WTC11 (cell line): ENCODE measurements at regions of chr3 and their contacts with region 1.

Region 1: DNA sequence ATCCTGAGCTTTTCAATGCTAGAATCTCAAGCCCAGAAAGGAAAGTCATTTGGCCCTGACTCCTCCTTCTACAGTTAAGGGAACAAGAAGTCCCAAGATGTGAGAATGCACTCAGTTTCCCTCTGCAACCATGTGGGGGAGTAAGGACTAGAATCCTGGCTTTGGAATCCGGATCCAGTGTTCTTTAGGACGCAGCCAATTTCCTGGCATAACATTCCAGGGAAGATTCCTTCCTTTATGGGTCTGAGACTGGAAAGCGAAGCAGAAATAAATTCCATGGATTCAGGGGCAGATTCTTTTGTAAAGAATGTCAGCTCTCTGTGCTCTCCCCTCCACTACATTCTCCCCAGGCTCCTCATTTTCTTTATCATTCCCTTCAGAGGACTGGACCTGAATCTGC is 151.8 kb upstream of the SOX14 start:
- DNase-seq: peak; percentile 18
- ATAC-seq: peak; percentile 93
- H3K4me3 Mint-ChIP-seq: no peak overlapping the region
- H3K27ac Mint-ChIP-seq: no peak overlapping the region
- H3K4me1 Mint-ChIP-seq: peaks cover 54% of the 10 kb centered on the region
- H3K27me3 Mint-ChIP-seq: no peaks in the 10 kb centered on the region
- CTCF ChIP-seq: no peak

Region 2: DNA sequence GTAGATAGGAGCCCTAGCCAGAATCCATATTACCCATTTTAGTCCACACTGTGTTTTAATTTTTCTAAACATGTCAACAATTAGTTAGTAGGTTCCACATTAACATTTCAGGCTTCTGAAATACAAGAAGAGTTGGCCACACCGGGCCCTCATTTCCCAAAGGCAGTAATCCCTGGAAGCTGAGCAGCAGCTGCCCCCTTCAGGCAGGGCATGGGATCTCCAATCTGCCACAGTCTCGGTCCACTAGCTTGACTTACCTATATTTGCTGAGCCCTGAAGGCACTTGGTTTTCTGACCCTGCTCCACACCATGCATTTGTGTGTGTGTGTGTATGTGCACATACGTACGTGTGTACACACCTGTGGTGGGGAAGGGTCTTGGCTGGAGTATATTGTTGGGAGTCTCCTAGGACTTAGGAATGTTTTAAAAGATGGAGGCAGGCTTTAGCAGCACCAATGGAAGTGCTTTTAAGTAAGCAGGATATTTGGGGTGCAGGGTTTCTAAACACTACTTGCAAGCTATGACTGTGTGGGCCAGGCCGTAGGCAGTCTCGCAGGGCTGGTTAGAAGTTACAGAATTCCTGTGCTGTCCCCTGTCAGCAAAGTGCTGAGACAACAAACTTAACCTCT is 80.6 kb after region 1 on chr3:
- CTCF ChIA-PET with region 1: interaction called, 17 read pairs
- POLR2A ChIA-PET with region 1: no interaction called
- DNase-seq: peak; percentile 80
- ATAC-seq: peak; percentile 90
- H3K4me3 Mint-ChIP-seq: no peak overlapping the region
- H3K27ac Mint-ChIP-seq: no peak overlapping the region
- H3K4me1 Mint-ChIP-seq: peaks cover 16% of the 10 kb centered on the region
- H3K27me3 Mint-ChIP-seq: no peaks in the 10 kb centered on the region
- CTCF ChIP-seq: peak; percentile 70

Region 3: GRCh38 chr3:138051946-138052802 is 439.9 kb after region 1 on chr3:
- CTCF ChIA-PET with region 1: no interaction called
- POLR2A ChIA-PET with region 1: no interaction called
- DNase-seq: peak; percentile 59
- ATAC-seq: peak; percentile 81
- H3K4me3 Mint-ChIP-seq: no peak overlapping the region
- H3K27ac Mint-ChIP-seq: no peak overlapping the region
- H3K4me1 Mint-ChIP-seq: peaks cover 9% of the 10 kb centered on the region
- H3K27me3 Mint-ChIP-seq: no peaks in the 10 kb centered on the region
- CTCF ChIP-seq: peak; percentile 27; the same call in 1 of the 2 replicates